ENCODE measurements at regions of chr5 and their contacts with region 1.

Region 1: DNA sequence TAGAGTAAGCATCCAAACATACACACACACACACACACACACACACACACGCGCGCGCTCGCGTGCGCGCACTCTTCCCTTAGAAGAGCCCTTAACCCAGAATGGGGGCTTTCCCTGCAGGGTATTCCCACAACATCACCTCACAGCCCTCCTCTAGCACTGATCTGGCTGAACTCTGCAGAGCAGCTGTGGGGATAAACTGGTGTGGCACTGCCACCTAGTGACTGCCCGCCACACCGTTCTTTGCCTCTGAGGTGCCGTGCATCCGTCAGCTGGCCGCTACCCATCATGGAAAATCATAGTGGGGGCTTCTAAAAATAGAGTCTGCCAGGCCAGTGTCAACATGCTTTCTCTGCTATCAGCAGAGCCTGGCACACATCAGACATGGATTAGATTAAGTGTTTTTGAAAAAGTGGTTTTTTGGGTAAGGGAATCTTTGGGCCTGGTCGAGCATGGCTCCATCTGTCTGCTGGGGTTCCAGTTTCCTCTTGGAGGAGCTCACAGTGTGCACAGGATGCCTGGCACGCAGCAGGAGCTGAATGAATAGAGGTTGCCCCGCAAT is 88.1 kb downstream of the KCNN2 start:
- DNase-seq: peak; percentile 51
- H3K4me3 ChIP-seq: no peak overlapping the region
- H3K27ac ChIP-seq: no peak overlapping the region
- H3K4me1 ChIP-seq: no peaks in the 10 kb centered on the region
- H3K27me3 ChIP-seq: no peaks in the 10 kb centered on the region
- CTCF ChIP-seq: peak; percentile 80

Region 2: DNA sequence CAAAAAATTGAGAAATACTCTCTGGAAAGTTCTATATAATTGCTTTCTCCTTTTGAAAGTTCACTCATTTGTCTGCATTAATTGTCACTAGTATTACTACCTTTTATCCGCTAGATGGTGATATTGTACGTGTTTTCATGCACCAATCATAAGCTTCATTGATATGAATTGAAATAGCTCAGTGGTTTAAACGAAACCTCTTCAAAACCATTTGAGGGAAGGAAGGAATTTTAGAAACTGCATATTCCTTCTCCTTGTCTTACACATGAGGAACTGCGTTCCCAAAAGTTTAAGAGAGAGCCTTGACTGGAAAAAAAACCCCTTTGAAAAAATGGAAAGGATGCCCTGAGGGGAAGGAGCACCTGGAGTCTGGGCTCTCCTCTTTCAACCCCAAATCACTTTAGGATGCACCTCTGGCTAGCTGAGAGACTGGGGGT is 837.9 kb before region 1 on chr5:
- intact Hi-C with region 1: loop called (anchors 5 kb)
- DNase-seq: no peak
- H3K4me3 ChIP-seq: no peak overlapping the region
- H3K27ac ChIP-seq: no peak overlapping the region
- H3K4me1 ChIP-seq: no peaks in the 10 kb centered on the region
- H3K27me3 ChIP-seq: no peaks in the 10 kb centered on the region
- CTCF ChIP-seq: peak; percentile 47

Region 3: GRCh38 chr5:113678924-113679575 is 770.9 kb before region 1 on chr5:
- intact Hi-C with region 1: loop called (anchors 5 kb)
- DNase-seq: peak; percentile 38
- H3K4me3 ChIP-seq: no peak overlapping the region
- H3K27ac ChIP-seq: no peak overlapping the region
- H3K4me1 ChIP-seq: no peaks in the 10 kb centered on the region
- H3K27me3 ChIP-seq: no peaks in the 10 kb centered on the region
- CTCF ChIP-seq: peak; percentile 60

Region 4: DNA sequence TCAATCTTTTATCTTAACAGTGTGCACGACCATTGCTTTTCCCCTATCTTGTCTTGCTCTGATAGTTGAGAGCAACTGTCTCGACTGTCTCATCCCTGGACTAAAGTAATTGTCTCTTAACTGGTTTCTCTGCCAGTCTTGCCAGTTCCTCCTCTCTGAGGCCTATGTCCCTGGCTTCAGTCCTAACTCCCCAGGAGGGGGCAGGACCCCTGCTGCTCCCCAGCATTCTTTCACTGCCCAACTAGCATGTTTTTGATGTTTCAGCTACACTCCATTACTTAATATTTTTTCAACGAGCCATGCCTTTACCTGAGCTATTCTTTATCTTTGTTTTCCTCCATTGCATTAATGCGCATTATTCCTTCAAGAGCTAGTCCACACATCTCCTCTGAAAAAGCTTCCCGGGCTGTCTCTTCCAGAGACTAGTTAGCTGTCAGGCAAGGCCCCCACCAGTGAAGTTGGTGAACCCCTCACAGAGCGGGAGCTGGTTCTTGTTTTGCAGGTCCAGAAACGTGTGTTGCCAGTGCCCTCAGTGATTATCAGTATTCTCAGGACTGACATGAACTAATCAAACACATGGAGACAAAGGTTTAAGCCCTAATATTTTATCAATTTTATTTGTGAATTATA is 379.7 kb before region 1 on chr5:
- intact Hi-C with region 1: no loop called
- DNase-seq: no peak
- H3K4me3 ChIP-seq: no peak overlapping the region
- H3K27ac ChIP-seq: no peak overlapping the region
- H3K4me1 ChIP-seq: no peaks in the 10 kb centered on the region
- H3K27me3 ChIP-seq: no peaks in the 10 kb centered on the region
- CTCF ChIP-seq: no peak

Region 5: DNA sequence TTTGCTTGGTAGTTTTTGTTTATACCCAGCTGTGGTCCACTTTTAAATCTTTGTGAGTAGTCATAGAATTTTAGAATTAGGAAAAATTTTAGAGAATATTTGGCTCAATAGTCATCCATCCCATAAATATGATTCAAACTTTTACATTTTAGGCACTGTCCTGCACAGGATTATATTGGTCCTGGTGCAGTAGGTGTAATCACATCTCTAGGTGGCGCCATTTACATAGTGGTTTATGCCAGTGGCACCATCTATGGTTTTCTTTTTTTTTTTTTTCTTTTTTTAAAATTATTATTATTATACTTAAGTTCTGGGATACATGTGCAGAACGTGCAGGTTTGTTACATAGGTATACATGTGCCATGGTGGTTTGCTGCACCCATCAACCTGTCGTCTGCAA is 348.8 kb before region 1 on chr5:
- intact Hi-C with region 1: loop called (anchors 5 kb)
- DNase-seq: peak; percentile 22
- H3K4me3 ChIP-seq: no peak overlapping the region
- H3K27ac ChIP-seq: no peak overlapping the region
- H3K4me1 ChIP-seq: no peaks in the 10 kb centered on the region
- H3K27me3 ChIP-seq: no peaks in the 10 kb centered on the region
- CTCF ChIP-seq: peak; percentile 52

Region 6: GRCh38 chr5:114361724-114362196 is 88.2 kb before region 1 on chr5 and contains the start of gene KCNN2:
- intact Hi-C with region 1: loop called (anchors 5 kb)
- DNase-seq: peak; percentile 86
- H3K4me3 ChIP-seq: peak within 1 kb of the TSS; percentile 54
- H3K27ac ChIP-seq: no peak within 1 kb of the TSS
- H3K4me1 ChIP-seq: peaks cover 6% of the 10 kb centered on the region
- H3K27me3 ChIP-seq: peaks cover 51% of the 10 kb centered on the region
- CTCF ChIP-seq: no peak
- total RNA-seq, gene KCNN2: 0.69 to 0.84 TPM